ENCODE measurements at regions of chr22 and their contacts with region 1.

Region 1: DNA sequence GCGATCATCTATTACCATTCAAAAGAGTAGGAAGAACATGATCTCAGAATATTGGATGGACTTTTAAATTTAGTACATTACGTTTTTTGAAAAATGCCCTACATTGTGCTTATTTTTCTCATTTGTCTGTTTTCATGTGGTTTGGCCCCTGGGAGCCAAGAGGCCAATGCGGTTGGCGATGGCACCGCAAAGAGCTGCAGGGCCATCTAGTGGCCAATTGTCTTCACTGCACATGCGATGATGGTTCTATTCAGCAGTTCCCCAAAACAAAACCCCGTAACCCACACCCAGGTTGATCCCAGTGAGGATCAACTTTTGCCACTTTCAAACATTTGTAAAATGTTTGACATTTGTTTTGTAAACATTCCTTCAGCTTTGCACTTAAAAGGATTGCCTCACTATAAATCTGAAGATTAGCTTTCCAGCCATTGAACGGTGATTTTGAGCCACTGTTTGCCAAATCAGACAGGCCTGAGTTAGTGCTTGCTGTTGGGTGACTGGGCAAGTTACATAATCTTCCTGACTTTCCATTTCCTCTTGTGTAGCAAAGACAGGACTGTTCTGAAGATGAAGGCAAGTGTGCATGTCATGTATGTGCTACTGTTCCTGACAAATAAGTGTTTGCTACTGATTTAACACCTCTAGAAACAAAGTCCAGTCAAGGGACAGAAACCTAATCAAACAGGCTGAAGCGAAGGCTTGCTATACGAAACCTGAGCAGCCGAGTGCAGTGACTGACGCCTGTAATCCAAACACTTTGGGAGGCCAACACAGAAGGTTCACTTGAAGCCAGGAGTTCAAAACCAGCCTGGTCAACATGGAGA is 29.2 kb upstream of the XBP1 start:
- DNase-seq: peak; percentile 80 to 81
- H3K4me3 ChIP-seq: no peak overlapping the region
- H3K27ac ChIP-seq: no peak overlapping the region
- H3K4me1 ChIP-seq: peaks cover 0 to 8% (median 3%) of the 10 kb centered on the region in 4 donors
- H3K27me3 ChIP-seq: no peaks in the 10 kb centered on the region
- CTCF ChIP-seq: peak; percentile 97 to 98

Region 2: DNA sequence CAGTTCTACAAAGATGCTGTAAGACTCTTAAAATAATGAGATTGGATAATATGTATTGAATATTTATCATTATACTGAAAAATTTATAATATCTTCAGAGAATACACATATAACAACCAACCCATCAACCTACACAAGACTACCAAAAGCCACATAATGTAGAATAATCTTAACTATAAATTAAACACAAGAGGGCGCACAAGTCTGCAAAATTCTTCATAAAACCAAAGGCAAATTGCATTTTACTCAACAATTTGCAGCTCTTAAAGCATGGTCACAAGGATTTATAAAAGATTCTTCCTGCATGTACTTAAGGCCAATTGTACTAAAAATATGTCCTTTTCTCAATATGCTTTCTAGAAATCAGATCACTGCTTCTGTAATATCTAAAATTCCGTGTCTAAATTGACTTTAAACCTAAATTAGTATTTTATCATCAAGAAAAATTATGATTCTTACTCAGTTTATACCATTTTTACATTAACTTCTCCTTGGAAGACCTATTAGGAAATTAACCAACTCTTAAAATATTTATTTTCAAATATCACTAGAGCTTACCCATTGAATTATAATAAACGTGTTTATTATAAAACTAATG is 228.9 kb before region 1 on chr22:
- intact Hi-C with region 1: loop called (anchors 2 kb)
- DNase-seq: no peak
- H3K4me3 ChIP-seq: no peak overlapping the region
- H3K27ac ChIP-seq: no peak overlapping the region
- H3K4me1 ChIP-seq: no peaks in the 10 kb centered on the region
- H3K27me3 ChIP-seq: no peaks in the 10 kb centered on the region
- CTCF ChIP-seq: peak; percentile 44 to 68

Region 3: DNA sequence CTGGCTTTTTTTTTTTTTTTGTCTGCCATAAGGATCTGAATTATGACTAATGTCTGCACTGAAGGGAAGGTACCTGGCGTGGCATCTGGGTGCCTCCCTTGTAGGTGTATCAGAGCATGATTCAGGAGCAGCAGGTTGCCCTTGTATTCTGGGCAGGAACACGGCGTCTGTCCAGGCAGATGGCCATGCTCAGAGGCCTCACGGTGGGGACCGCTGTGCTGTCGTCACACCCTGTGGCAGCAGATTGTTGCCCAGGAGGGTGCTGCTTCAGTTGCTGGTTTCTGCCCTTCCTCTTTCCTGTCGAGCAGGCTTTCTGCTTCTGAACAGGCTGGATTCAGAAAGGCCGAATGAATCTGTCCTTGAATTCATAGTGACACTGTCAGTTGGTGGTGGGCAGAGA is 64.8 kb after region 1 on chr22:
- intact Hi-C with region 1: no loop called
- DNase-seq: peak in 1 of 2 donors; percentile 49
- H3K4me3 ChIP-seq: no peak overlapping the region
- H3K27ac ChIP-seq: no peak overlapping the region
- H3K4me1 ChIP-seq: peaks cover 0 to 13% (median 3%) of the 10 kb centered on the region in 4 donors
- H3K27me3 ChIP-seq: no peaks in the 10 kb centered on the region
- CTCF ChIP-seq: no peak

Measured in tibial artery (tissue), 4 donors.